ENCODE measurements at regions of chr2 and their contacts with region 1.

Region 1: GRCh38 chr2:238963161-238963970 is 115.5 kb downstream of the TWIST2 start:
- DNase-seq: no peak
- H3K4me3 ChIP-seq: no peak overlapping the region
- H3K27ac ChIP-seq: peak overlapping the region in 1 of 5 donors; percentile 34
- H3K4me1 ChIP-seq: no peaks in the 10 kb centered on the region
- H3K27me3 ChIP-seq: no peaks in the 10 kb centered on the region
- CTCF ChIP-seq: no peak
- POLR2A ChIP-seq: no peak

Region 2: DNA sequence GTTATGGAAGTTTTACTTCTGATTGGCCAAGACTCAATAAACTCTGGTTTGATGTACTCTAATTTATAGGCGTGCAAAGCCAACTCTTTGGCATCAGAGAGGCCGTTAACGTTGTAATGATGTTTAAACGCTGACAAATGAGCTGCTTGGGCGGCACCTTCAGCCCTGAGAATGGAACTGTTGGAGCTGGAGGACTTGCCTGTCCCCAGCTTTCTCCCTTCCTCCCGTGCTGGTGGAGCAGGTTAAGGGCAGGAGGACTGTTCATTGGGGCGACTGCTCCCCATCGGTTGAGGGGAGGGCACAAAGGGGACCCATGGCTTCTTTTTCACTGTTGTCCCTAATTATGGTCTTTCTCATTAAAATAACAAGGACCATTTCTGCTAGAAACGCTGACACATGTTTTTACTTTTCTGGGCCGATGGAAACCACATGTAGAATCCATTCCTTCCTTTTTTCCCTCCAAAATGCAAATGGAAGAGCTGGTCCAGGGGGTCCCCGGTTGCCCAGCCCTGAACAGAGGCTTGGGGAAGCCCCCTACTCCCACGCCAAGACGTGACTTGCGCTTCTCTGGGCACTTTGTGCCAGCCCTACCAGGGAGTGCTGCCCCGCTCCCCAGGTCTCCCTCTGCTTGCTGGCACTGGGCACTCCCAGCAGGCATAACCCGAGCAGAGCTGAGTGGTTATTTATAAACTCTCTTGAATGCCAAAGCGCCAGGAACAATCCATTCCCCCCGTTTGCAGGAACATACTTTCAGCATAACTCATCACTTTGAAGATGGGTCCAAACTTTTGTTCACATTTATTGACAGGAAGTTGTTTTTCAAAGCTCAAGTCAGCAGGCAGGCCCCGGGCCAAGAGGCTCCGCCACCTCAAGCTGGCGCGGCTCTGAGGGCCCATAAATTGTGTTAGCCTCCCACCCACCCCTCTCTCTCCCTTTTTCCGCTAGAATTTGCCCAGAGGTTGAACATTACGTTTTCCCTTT is 366.5 kb before region 1 on chr2:
- intact Hi-C with region 1: no loop called
- DNase-seq: peak; percentile 59 to 88 (median 85)
- H3K4me3 ChIP-seq: peak overlapping the region in 1 of 4 donors; percentile 1
- H3K27ac ChIP-seq: peak overlapping the region in 4 of 5 donors; percentile 39 to 85 (median 50)
- H3K4me1 ChIP-seq: peaks cover 13 to 15% of the 10 kb centered on the region in 2 donors
- H3K27me3 ChIP-seq: no peaks in the 10 kb centered on the region
- CTCF ChIP-seq: no peak
- POLR2A ChIP-seq: peak in 1 of 2 donors; percentile 63

Region 3: DNA sequence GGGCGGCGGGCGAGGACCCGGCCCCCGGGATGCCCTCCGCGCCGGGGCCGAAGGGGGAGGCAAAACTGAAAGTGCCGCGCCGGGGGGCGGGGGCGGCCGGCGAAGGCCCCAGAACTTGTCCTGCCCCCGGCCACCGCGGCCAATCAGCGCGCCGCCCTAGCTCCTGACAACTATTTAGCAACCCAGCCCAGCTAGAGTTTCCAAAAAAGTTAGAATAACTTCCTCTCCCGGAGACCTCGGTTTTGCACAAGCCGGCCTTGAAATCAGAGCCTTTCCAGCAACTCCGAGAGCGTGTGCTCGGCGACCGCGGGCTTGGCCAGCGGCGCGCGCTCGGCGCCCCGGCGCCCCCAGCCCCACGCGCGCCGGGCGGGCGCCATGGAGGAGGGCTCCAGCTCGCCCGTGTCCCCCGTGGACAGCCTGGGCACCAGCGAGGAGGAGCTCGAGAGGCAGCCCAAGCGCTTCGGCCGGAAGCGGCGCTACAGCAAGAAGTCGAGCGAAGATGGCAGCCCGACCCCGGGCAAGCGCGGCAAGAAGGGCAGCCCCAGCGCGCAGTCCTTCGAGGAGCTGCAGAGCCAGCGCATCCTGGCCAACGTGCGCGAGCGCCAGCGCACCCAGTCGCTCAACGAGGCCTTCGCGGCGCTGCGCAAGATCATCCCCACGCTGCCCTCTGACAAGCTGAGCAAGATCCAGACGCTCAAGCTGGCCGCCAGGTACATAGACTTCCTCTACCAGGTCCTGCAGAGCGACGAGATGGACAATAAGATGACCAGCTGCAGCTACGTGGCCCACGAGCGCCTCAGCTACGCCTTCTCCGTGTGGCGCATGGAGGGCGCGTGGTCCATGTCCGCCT is 115.3 kb before region 1 on chr2 and contains the start of gene TWIST2:
- intact Hi-C with region 1: loop called in 1 of 2 experiments (anchors 10 kb)
- DNase-seq: peak in 6 of 7 donors; percentile 46 to 73 (median 62)
- H3K4me3 ChIP-seq: peak within 1 kb of the TSS in 2 of 4 donors; percentile 17 to 56
- H3K27ac ChIP-seq: peak within 1 kb of the TSS in 3 of 5 donors; percentile 51 to 84 (median 52)
- H3K4me1 ChIP-seq: peaks cover 0 to 8% of the 10 kb centered on the region in 2 donors
- H3K27me3 ChIP-seq: peaks cover 42% of the 10 kb centered on the region
- CTCF ChIP-seq: no peak
- POLR2A ChIP-seq: peak; percentile 22 to 23
- total RNA-seq, gene TWIST2: 1.7 to 20.5 (median 5.3) TPM

Region 4: GRCh38 chr2:239380831-239381708 is 417.7 kb after region 1 on chr2:
- intact Hi-C with region 1: no loop called
- DNase-seq: peak in 2 of 7 donors; percentile 29 to 55
- H3K4me3 ChIP-seq: no peak overlapping the region
- H3K27ac ChIP-seq: no peak overlapping the region
- H3K4me1 ChIP-seq: peaks cover 0 to 7% of the 10 kb centered on the region in 2 donors
- H3K27me3 ChIP-seq: no peaks in the 10 kb centered on the region
- CTCF ChIP-seq: no peak
- POLR2A ChIP-seq: no peak